Upper lobe of right lung (tissue), 1 donor: ENCODE measurements at regions of chr20 and their contacts with region 1.

Region 1: GRCh38 chr20:645318-646106 is 7.5 kb downstream of the SRXN1 start:
- DNase-seq: peak; percentile 81
- ATAC-seq: peak; percentile 89
- H3K4me3 ChIP-seq: no peak overlapping the region
- H3K27ac ChIP-seq: no peak overlapping the region
- H3K4me1 ChIP-seq: peaks cover 8% of the 10 kb centered on the region
- H3K27me3 ChIP-seq: no peaks in the 10 kb centered on the region
- CTCF ChIP-seq: peak; percentile 96

Region 2: GRCh38 chr20:561437-562231 is 83.9 kb before region 1 on chr20:
- intact Hi-C with region 1: loop called (anchors 5 kb)
- DNase-seq: no peak
- ATAC-seq: peak; percentile 91
- H3K4me3 ChIP-seq: no peak overlapping the region
- H3K27ac ChIP-seq: no peak overlapping the region
- H3K4me1 ChIP-seq: no peaks in the 10 kb centered on the region
- H3K27me3 ChIP-seq: peaks cover 16% of the 10 kb centered on the region
- CTCF ChIP-seq: peak; percentile 95